Activated CD8-positive, alpha-beta T cell treated with anti-CD3 and anti-CD28 coated beads for 36 hours (primary cell): ENCODE measurements at regions of chr17 and their contacts with region 1.

Region 1: GRCh38 chr17:34171245-34171818 is 83.8 kb upstream of the CCL2 start:
- DNase-seq: peak; percentile 77
- ATAC-seq: peak; percentile 83
- H3K4me3 Mint-ChIP-seq: no peak overlapping the region
- H3K27ac Mint-ChIP-seq: no peak overlapping the region
- H3K4me1 Mint-ChIP-seq: peaks cover 1% of the 10 kb centered on the region
- H3K27me3 Mint-ChIP-seq: no peaks in the 10 kb centered on the region
- CTCF ChIP-seq: peak; percentile 88

Region 2: GRCh38 chr17:34156741-34157589 is 14.4 kb before region 1 on chr17:
- CTCF ChIA-PET with region 1: interaction called, 10 read pairs
- POLR2A ChIA-PET with region 1: no interaction called
- intact Hi-C with region 1: no loop called
- DNase-seq: no peak
- ATAC-seq: no peak
- H3K4me3 Mint-ChIP-seq: no peak overlapping the region
- H3K27ac Mint-ChIP-seq: no peak overlapping the region
- H3K4me1 Mint-ChIP-seq: peaks cover 5% of the 10 kb centered on the region
- H3K27me3 Mint-ChIP-seq: peaks cover 42% of the 10 kb centered on the region
- CTCF ChIP-seq: no peak

Region 3: DNA sequence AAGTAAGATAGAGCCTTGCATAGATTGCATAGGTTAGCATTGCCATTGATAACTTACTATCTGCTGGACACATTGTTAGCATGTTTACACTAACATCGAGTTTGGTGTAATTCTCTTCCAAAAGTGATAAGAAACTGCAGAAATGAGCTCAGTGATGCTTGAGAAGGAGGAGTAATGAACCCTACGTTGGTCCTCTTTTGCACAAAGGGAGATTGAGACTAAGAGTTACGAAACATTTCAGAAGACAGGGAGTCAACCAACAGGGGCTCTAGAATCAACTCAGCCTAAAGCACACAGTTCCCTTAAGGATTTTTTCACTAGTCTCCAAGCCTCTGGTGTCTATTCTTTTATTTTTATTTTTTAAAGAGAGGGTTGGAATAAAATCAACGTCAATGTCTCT is 105.5 kb after region 1 on chr17:
- CTCF ChIA-PET with region 1: no interaction called
- POLR2A ChIA-PET with region 1: no interaction called
- intact Hi-C with region 1: no loop called
- DNase-seq: no peak
- ATAC-seq: no peak
- H3K4me3 Mint-ChIP-seq: no peak overlapping the region
- H3K27ac Mint-ChIP-seq: no peak overlapping the region
- H3K4me1 Mint-ChIP-seq: no peaks in the 10 kb centered on the region
- H3K27me3 Mint-ChIP-seq: peaks cover 31% of the 10 kb centered on the region
- CTCF ChIP-seq: no peak

Region 4: GRCh38 chr17:34378664-34379101 is 207.4 kb after region 1 on chr17:
- CTCF ChIA-PET with region 1: interaction called, 10 read pairs
- POLR2A ChIA-PET with region 1: no interaction called
- intact Hi-C with region 1: no loop called
- DNase-seq: peak; percentile 54
- ATAC-seq: peak; percentile 57
- H3K4me3 Mint-ChIP-seq: no peak overlapping the region
- H3K27ac Mint-ChIP-seq: no peak overlapping the region
- H3K4me1 Mint-ChIP-seq: peaks cover 49% of the 10 kb centered on the region
- H3K27me3 Mint-ChIP-seq: peaks cover 14% of the 10 kb centered on the region
- CTCF ChIP-seq: no peak